ENCODE measurements at regions of chr1 and their contacts with region 1.

Region 1: GRCh38 chr1:21034725-21035628 is 141.7 kb downstream of the EIF4G3 start:
- DNase-seq: no peak
- ATAC-seq: no peak
- H3K4me3 ChIP-seq: no peak overlapping the region
- H3K27ac ChIP-seq: no peak overlapping the region
- H3K4me1 ChIP-seq: peaks cover 0 to 9% of the 10 kb centered on the region in 2 experiments; a peak in 2 of 4 replicates
- H3K27me3 ChIP-seq: no peaks in the 10 kb centered on the region
- CTCF ChIP-seq: no peak
- POLR2A ChIP-seq: no peak
- RAD21 ChIP-seq: no peak

Region 2: DNA sequence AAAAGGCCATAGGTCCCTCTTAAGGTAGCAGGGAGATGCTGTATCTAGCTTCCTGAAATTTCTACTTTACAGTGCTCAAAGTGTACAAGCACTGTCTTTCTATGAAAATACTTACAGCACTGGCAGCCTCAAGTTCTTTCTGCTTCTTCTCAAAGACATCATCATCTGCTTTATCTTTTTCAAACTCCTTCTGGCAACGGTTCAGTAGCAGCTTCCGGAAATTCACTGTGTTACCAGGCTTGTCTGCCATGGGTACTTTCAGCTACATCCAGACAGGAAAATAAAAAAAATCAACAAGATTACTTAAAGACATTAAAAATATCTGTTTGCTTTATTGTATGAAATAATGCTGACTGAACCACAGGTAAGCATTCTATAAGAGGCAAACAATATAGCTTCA is 170.0 kb before region 1 on chr1:
- CTCF ChIA-PET with region 1: no interaction called
- POLR2A ChIA-PET with region 1: no interaction called
- RAD21 ChIA-PET with region 1: no interaction called
- intact Hi-C with region 1: no loop called
- DNase-seq: no peak
- ATAC-seq: no peak
- H3K4me3 ChIP-seq: no peak overlapping the region
- H3K27ac ChIP-seq: no peak overlapping the region
- H3K4me1 ChIP-seq: no peaks in the 10 kb centered on the region
- H3K27me3 ChIP-seq: no peaks in the 10 kb centered on the region
- CTCF ChIP-seq: no peak
- POLR2A ChIP-seq: no peak
- RAD21 ChIP-seq: no peak

Region 3: GRCh38 chr1:21082073-21082472 is 47.1 kb after region 1 on chr1:
- CTCF ChIA-PET with region 1: no interaction called
- POLR2A ChIA-PET with region 1: no interaction called
- RAD21 ChIA-PET with region 1: no interaction called
- intact Hi-C with region 1: loop called (anchors 5 kb)
- DNase-seq: no peak
- ATAC-seq: no peak
- H3K4me3 ChIP-seq: no peak overlapping the region
- H3K27ac ChIP-seq: no peak overlapping the region
- H3K4me1 ChIP-seq: peaks cover 8 to 21% of the 10 kb centered on the region in 2 experiments
- H3K27me3 ChIP-seq: no peaks in the 10 kb centered on the region
- CTCF ChIP-seq: no peak
- POLR2A ChIP-seq: no peak
- RAD21 ChIP-seq: no peak

Measured in HCT116 (cell line).